MCF 10A (cell line): ENCODE measurements at regions of chr14 and their contacts with region 1.

Region 1: DNA sequence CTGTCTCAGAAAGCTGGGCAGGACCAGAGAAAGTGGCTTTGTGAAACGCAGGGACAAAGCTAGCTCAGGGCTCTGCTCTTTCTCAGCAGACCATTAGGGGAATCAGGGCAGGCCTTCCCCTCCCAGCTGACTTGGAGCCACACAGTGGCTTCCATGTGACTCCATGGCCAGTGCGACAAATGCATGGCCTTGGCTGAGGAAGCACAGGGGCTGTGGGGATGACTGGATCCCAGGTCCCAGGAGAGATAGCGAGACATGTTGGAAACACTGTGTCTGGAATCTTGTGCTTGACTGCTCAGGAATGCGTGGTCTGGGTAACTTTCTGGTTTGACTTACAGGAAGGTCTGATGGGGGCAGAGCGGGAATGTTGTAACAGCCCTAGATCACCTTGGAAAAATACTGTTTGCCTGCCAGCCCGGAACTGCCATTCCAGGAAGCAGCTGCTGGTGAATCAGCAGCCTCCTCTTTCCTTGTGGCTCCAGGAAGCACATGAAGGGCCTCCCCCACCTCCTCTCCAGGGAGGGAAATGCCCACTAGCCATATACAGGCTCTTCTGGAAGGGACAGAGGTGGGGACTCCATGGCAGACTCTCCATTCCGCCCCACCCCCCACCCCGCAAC is 133.5 kb upstream of the HIF1A start:
- DNase-seq: peak; percentile 97
- H3K4me3 Mint-ChIP-seq: peak overlapping the region; percentile 3
- H3K27ac Mint-ChIP-seq: peak overlapping the region; percentile 86
- H3K4me1 Mint-ChIP-seq: peaks cover 56% of the 10 kb centered on the region
- H3K27me3 Mint-ChIP-seq: no peaks in the 10 kb centered on the region
- CTCF ChIP-seq: no peak

Region 2: GRCh38 chr14:61537563-61538463 is 24.0 kb before region 1 on chr14:
- CTCF ChIA-PET with region 1: interaction called, 5 read pairs
- POLR2A ChIA-PET with region 1: interaction called, 103 read pairs
- intact Hi-C with region 1: loop called (anchors 1 kb)
- DNase-seq: peak; percentile 97
- H3K4me3 Mint-ChIP-seq: peak overlapping the region; percentile 10
- H3K27ac Mint-ChIP-seq: peak overlapping the region; percentile 88
- H3K4me1 Mint-ChIP-seq: peaks cover 32% of the 10 kb centered on the region
- H3K27me3 Mint-ChIP-seq: no peaks in the 10 kb centered on the region
- CTCF ChIP-seq: no peak

Region 3: DNA sequence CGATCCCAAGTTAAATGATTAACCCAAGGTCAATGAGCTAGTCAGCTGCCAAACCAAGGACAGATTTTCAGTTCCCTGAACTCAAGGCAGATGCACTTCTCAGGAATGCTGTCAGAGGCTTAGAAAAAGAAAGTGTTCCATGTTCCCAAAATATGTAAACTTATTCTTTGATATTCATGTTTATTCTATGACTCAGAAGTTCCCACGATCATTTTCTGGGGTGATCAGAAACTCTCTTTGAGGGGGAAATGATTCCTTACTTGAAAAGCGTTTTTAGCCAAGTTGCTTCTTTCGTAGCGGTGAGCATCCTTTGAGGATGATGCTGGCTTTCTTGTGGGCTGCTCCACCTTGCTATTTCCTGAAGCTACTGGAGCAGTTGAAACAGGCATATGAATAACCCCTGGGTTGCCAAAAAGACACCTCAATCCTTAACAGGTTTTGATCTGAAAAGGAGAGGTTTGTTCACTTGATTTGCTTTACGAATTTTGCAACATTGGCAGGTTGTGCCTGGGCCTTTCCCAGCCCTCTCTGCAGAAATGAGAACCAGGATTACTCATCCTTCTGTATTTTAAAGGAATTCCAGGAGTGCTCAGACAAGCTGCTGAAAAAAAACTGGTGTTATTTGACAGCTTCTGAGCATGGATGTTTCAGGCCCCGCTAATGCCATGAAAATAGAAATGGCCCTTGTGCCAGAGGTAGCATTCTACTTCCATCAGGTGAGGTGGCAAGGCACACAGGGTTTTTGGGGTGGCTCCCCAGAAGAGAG is 12.2 kb after region 1 on chr14:
- CTCF ChIA-PET with region 1: interaction called, 4 read pairs
- POLR2A ChIA-PET with region 1: interaction called, 29 read pairs
- intact Hi-C with region 1: no loop called
- DNase-seq: peak; percentile 87
- H3K4me3 Mint-ChIP-seq: peak overlapping the region; percentile 31
- H3K27ac Mint-ChIP-seq: peak overlapping the region; percentile 91
- H3K4me1 Mint-ChIP-seq: peaks cover 42% of the 10 kb centered on the region
- H3K27me3 Mint-ChIP-seq: no peaks in the 10 kb centered on the region
- CTCF ChIP-seq: no peak

Region 4: GRCh38 chr14:61620130-61620946 is 58.6 kb after region 1 on chr14:
- CTCF ChIA-PET with region 1: interaction called, 3 read pairs
- POLR2A ChIA-PET with region 1: interaction called, 10 read pairs
- intact Hi-C with region 1: no loop called
- DNase-seq: peak; percentile 90
- H3K4me3 Mint-ChIP-seq: no peak overlapping the region
- H3K27ac Mint-ChIP-seq: peak overlapping the region; percentile 69
- H3K4me1 Mint-ChIP-seq: peaks cover 30% of the 10 kb centered on the region
- H3K27me3 Mint-ChIP-seq: no peaks in the 10 kb centered on the region
- CTCF ChIP-seq: no peak